ENCODE measurements at regions of chr6 and their contacts with region 1.

Region 1: GRCh38 chr6:117482240-117483003 is at the start of gene DCBLD1:
- DNase-seq: peak; percentile 68 to 83
- ATAC-seq: peak; percentile 89 to 96 (median 93)
- H3K4me3 ChIP-seq: peak within 1 kb of the TSS; percentile 48 to 92 (median 82)
- H3K27ac ChIP-seq: peak within 1 kb of the TSS; percentile 70 to 94 (median 89)
- H3K4me1 ChIP-seq: peaks cover 5 to 29% (median 18%) of the 10 kb centered on the region in 9 donors
- H3K27me3 ChIP-seq: peaks cover 0 to 24% (median 0%) of the 10 kb centered on the region in 7 donors
- CTCF ChIP-seq: no peak
- total RNA-seq, gene DCBLD1: 2.7 to 7.2 (median 4.2) TPM

Region 2: GRCh38 chr6:117531346-117531745 is 48.9 kb after region 1 on chr6:
- intact Hi-C with region 1: loop called in 1 of 10 experiments (anchors 5 kb)
- DNase-seq: no peak
- ATAC-seq: peak in 1 of 8 donors; percentile 48
- H3K4me3 ChIP-seq: no peak overlapping the region
- H3K27ac ChIP-seq: peak overlapping the region in 5 of 10 donors; percentile 4 to 49 (median 37)
- H3K4me1 ChIP-seq: peaks cover 0 to 22% (median 9%) of the 10 kb centered on the region in 9 donors
- H3K27me3 ChIP-seq: no peaks in the 10 kb centered on the region
- CTCF ChIP-seq: no peak

Region 3: GRCh38 chr6:117547688-117548621 is 65.5 kb after region 1 on chr6:
- intact Hi-C with region 1: loop called in 5 of 10 experiments (anchors 1 to 10 kb)
- DNase-seq: peak; percentile 67 to 71
- ATAC-seq: peak; percentile 82 to 97 (median 89)
- H3K4me3 ChIP-seq: peak overlapping the region; percentile 23 to 64 (median 52)
- H3K27ac ChIP-seq: peak overlapping the region in 8 of 10 donors; percentile 10 to 71 (median 46)
- H3K4me1 ChIP-seq: peaks cover 0 to 34% (median 10%) of the 10 kb centered on the region in 9 donors
- H3K27me3 ChIP-seq: no peaks in the 10 kb centered on the region
- CTCF ChIP-seq: peak in 4 of 9 donors; percentile 27 to 43 (median 40)

Region 4: GRCh38 chr6:117555882-117556498 is 73.6 kb after region 1 on chr6:
- intact Hi-C with region 1: loop called in 2 of 10 experiments (anchors 2 kb)
- DNase-seq: peak in 1 of 2 donors; percentile 41
- ATAC-seq: peak in 1 of 8 donors; percentile 37
- H3K4me3 ChIP-seq: no peak overlapping the region
- H3K27ac ChIP-seq: no peak overlapping the region
- H3K4me1 ChIP-seq: peaks cover 0 to 7% (median 0%) of the 10 kb centered on the region in 9 donors
- H3K27me3 ChIP-seq: no peaks in the 10 kb centered on the region
- CTCF ChIP-seq: peak; percentile 84 to 96 (median 88)